PC-9 (cell line): ENCODE measurements at regions of chr1 and their contacts with region 1.

Region 1: DNA sequence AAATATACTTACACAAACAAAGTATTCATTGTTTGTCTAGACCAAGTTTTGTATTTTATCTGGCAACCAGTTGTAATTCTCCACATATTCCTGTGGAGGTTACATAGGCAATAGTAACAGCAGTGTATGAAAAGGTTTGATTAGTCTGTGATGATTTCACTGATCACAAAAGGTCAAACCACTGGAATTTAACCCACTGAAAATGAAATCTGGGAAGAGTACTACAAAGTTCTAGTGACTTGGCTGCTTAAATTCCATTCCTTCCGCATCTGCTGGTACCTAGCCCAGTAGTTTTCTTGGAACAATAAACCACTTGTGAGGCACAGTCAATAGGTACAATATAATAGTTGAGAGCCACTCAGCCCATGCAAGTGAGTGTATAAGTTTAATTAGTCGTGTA is 205.4 kb downstream of the NFIA start:
- DNase-seq: peak in 1 of 2 experiments; percentile 60
- H3K4me3 ChIP-seq: no peak overlapping the region
- H3K27ac ChIP-seq: peak overlapping the region; percentile 17; the same call in 1 of the 2 replicates
- H3K4me1 ChIP-seq: peaks cover 42% of the 10 kb centered on the region
- H3K27me3 ChIP-seq: no peaks in the 10 kb centered on the region
- CTCF ChIP-seq: no peak

Region 2: DNA sequence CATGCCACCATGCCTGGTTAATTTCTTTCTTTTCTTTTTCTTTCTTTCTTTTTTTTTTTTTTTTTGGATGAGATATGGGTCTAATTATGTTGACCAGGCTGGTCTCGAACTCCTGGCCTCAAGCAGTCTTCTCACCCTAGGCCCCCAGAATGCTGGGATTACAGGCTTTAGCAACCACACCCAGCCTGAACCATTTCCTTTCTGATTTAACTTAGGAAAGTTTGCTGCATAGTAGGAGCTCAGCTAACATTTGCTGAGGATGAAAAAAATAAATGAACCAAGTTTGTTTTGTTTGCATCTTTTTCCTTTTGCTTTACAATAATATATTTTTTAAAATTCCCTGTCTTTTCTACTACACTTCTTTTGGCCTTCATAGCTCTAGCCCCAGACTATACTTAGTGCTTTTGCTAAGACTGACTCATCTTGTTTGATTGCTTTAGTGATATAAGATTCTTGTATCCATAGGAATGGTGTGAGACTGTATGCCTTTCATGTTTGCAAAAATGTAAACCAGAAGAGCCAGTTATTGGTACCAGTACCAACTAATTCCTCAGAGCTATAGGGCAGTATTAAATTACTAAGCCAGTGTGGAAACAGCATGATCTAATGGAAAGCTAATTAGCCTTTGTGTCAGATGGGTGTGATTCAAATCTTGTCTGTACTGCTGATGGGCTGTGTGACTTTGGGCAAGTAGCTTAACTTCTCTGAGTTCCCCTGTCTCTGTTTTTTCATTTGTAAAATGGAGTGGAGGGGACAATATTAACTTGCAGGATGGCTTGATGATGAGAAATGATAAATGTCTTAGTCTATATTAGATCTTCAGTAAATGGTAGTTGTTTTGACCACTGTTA is 138.5 kb before region 1 on chr1:
- CTCF ChIA-PET with region 1: no interaction called
- POLR2A ChIA-PET with region 1: no interaction called
- intact Hi-C with region 1: loop called (anchors 5 kb)
- DNase-seq: peak in 1 of 2 experiments; percentile 98
- H3K4me3 ChIP-seq: no peak overlapping the region
- H3K27ac ChIP-seq: peak overlapping the region; percentile 50
- H3K4me1 ChIP-seq: peaks cover 30% of the 10 kb centered on the region
- H3K27me3 ChIP-seq: no peaks in the 10 kb centered on the region
- CTCF ChIP-seq: no peak

Region 3: GRCh38 chr1:61253059-61253735 is 34.5 kb before region 1 on chr1:
- CTCF ChIA-PET with region 1: interaction called, 11 read pairs
- POLR2A ChIA-PET with region 1: no interaction called
- intact Hi-C with region 1: no loop called
- DNase-seq: peak; percentile 66 to 81
- H3K4me3 ChIP-seq: no peak overlapping the region
- H3K27ac ChIP-seq: peak overlapping the region; percentile 36; the same call in 1 of the 2 replicates
- H3K4me1 ChIP-seq: peaks cover 22% of the 10 kb centered on the region
- H3K27me3 ChIP-seq: no peaks in the 10 kb centered on the region
- CTCF ChIP-seq: no peak

Region 4: DNA sequence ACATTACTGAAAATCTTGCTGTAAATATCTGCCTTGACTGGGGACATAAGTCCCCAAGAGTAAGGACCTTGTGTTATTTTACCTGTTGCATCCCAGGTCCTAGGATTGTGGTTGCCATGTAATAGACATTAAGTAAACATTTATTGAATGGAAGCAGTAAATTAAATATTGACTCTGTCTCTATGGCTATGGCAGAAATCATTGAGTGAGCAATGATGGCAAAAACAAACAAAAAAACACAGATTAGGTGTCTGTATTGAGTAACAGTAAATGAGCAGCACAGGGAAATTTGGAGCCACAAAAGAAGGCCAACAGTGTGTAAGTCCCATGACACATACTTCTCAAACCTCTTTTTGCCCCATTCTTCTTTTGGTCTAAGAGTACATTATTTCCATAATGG is 35.0 kb after region 1 on chr1:
- CTCF ChIA-PET with region 1: no interaction called
- POLR2A ChIA-PET with region 1: no interaction called
- intact Hi-C with region 1: loop called (anchors 5 kb)
- DNase-seq: peak in 1 of 2 experiments; percentile 94
- H3K4me3 ChIP-seq: no peak overlapping the region
- H3K27ac ChIP-seq: peak overlapping the region; percentile 50
- H3K4me1 ChIP-seq: peaks cover 35% of the 10 kb centered on the region
- H3K27me3 ChIP-seq: no peaks in the 10 kb centered on the region
- CTCF ChIP-seq: no peak

Region 5: GRCh38 chr1:61588736-61589672 is 301.3 kb after region 1 on chr1:
- CTCF ChIA-PET with region 1: no interaction called
- POLR2A ChIA-PET with region 1: no interaction called
- intact Hi-C with region 1: loop called (anchors 5 kb)
- DNase-seq: peak; percentile 53 to 69
- H3K4me3 ChIP-seq: no peak overlapping the region
- H3K27ac ChIP-seq: no peak overlapping the region
- H3K4me1 ChIP-seq: no peaks in the 10 kb centered on the region
- H3K27me3 ChIP-seq: no peaks in the 10 kb centered on the region
- CTCF ChIP-seq: peak; percentile 90

Region 6: GRCh38 chr1:61741711-61742619 is 454.2 kb after region 1 on chr1 and contains the start of gene PATJ:
- CTCF ChIA-PET with region 1: interaction called, 10 read pairs
- POLR2A ChIA-PET with region 1: no interaction called
- intact Hi-C with region 1: no loop called
- DNase-seq: peak; percentile 80 to 95
- H3K4me3 ChIP-seq: peak within 1 kb of the TSS; percentile 99
- H3K27ac ChIP-seq: peak within 1 kb of the TSS; percentile 82
- H3K4me1 ChIP-seq: peaks cover 47% of the 10 kb centered on the region
- H3K27me3 ChIP-seq: no peaks in the 10 kb centered on the region
- CTCF ChIP-seq: no peak
- total RNA-seq, gene PATJ: 86.8 and 91.0 TPM in 2 replicates